ENCODE measurements at regions of chr4 and their contacts with region 1.

Region 1: DNA sequence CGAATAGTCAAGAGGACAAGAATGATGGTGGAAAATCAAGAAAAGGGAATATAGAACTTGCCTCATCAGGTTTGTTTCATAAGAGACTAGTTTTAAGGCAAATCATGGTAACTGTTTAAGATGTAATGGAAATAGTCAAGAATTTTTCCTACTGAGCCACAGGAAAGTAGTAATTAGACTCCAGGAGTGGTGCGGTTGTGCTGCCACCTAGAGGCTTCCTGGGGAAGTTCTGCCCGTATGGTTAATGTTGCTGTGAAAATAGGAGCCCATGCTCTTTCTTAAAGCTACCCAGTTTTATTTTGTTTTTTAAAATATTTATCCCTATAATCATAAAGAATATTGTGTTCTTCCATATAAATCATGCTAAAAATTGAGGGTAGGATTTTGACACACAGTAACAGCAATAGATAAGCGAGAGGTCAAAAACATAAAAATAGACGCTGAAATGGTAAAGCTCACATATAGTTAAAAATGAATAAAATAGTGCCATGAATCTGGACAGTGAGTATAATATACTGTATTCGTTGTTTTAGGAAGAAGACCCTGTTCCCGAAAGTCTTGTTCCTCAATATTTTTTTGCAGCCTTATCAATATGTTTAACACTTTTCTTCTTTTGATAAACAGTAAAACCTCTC is 87.0 kb downstream of the PHOX2B start:
- DNase-seq: peak; percentile 60
- H3K27ac ChIP-seq: no peak overlapping the region
- CTCF ChIP-seq: peak; percentile 95

Region 2: DNA sequence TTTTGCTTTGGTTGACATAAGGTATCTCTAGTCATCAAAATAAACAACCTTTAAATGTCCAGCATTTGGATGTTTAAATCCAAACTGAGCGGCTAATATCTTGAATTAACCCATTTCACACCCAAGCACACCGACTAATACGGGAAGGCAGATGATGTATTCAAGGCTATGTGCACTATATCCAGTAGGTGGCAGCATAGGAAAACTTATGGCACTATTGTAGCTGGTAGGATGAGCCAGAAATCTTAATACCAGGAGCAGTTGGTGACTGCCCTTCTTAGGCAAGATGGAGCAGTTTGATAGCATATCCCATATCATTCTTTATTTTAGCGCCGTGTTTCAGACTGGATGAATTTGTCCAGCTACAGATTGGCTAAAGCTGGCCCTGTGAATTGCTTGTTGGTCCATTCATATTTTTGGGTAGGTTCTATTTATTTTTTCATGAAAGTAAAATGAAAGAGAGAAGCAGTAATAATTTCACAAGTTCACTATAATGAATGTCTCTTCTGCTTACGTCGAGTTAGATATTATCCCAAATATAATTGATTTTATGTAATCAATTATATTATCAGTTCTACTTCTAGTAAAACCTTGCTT is 380.4 kb before region 1 on chr4:
- CTCF ChIA-PET with region 1: interaction called, 29 read pairs
- POLR2A ChIA-PET with region 1: no interaction called
- DNase-seq: peak; percentile 89
- H3K27ac ChIP-seq: no peak overlapping the region
- CTCF ChIP-seq: peak; percentile 80

Region 3: DNA sequence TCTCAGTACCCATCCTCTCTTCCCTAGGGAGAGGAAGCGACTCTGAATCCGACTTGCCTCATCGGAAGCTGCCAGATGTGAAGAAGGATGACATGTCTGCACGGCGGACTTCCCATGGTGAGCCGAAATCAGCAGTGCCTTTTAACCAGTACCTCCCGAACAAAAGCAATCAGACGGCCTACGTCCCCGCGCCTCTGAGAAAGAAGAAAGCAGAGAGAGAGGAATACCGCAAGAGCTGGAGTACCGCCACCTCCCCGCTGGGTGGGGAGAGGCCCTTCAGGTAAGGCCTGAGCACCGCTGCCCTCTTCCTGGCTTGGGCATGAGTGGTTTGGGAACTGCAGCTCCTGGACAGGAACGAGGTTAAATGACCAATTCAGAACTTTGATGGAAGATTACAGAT is 42.4 kb before region 1 on chr4:
- CTCF ChIA-PET with region 1: no interaction called
- POLR2A ChIA-PET with region 1: no interaction called
- DNase-seq: no peak
- H3K27ac ChIP-seq: no peak overlapping the region
- CTCF ChIP-seq: no peak

Region 4: DNA sequence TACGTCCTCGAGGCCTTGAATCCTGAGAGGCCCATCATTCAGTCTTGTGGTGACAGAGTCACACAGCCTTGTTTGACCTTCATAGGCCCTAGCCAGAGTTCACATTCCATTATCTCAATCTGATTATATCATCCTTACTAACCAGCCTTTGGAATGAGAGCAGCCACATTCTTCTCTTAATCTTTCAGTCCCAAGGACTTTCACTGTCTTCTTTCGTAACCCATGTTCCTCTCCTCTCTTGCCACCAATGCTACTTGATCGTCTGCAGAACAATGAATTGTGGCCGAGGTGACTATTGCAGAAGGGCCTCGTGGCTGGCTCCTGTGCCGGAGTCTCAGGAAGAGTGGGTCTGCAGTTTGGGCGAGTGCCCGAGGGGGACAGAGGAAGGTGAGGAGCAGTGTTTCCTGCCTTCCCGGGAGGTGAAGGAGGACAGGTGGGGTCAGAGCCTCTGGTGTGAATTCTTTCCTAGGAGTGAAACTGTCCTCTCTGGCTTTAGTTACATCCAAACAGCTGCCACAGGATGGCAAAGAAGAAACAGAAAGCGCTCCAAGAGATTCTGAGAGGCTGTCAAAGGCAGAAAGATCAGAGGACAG is 29.0 kb before region 1 on chr4:
- CTCF ChIA-PET with region 1: no interaction called
- POLR2A ChIA-PET with region 1: no interaction called
- DNase-seq: no peak
- H3K27ac ChIP-seq: no peak overlapping the region
- CTCF ChIP-seq: no peak

Measured in RWPE1 (cell line).